ENCODE measurements at regions of chr12 and their contacts with region 1.

Region 1: GRCh38 chr12:13211859-13212664 is 15.5 kb downstream of the EMP1 start:
- DNase-seq: peak; percentile 70 to 78
- ATAC-seq: peak; percentile 55 to 57; a peak in 5 of 6 replicates
- H3K4me3 ChIP-seq: no peak overlapping the region
- H3K27ac ChIP-seq: peak overlapping the region; percentile 71 to 83
- H3K4me1 ChIP-seq: peaks cover 41% of the 10 kb centered on the region
- CTCF ChIP-seq: peak; percentile 96
- EP300 ChIP-seq: no peak
- POLR2A ChIP-seq: no peak
- RAD21 ChIP-seq: peak; percentile 96 to 97

Region 2: DNA sequence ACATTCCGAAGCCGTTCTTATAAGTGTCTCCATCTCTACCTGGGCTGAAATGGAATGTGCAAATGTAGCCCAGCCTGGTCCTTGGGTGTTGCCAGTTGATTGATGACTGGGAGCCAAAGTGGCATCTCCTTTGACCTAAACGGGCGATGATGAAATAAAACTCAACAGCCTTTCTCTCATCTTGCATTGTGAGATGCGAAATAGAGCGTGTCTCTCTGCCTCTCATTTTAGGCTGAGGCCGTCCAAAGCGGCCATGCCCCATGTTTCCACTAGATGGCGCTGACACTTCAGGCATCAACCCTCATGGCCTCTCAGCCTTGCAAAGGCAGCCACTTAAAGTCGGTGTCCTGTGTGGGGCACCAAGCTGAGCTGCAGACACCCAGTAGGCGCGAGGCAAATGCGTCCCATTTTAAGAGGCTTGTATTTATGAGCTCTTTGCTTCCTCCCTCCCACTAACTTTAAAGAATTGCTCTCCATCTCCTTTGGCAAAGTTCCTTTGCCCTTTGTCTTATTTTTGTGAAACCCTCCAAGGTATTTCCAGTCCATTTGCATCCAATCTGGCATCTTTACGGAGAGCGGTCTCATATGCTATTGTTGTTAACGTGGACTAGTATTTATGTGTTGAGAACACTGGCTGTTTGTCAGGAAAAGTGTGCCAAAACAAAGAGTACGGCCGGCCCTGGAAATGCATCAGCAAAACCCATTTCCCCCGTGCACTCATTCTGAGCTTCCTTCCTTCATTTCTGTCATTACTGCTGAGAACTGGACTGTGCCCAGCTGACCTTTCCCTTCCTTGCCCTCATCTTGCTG is 295.7 kb before region 1 on chr12:
- CTCF ChIA-PET with region 1: interaction called, 35 read pairs
- POLR2A ChIA-PET with region 1: no interaction called
- DNase-seq: peak; percentile 66 to 86
- ATAC-seq: peak; percentile 75 to 79
- H3K4me3 ChIP-seq: no peak overlapping the region
- H3K27ac ChIP-seq: peak overlapping the region; percentile 29 to 47; a peak in 4 of 6 replicates
- H3K4me1 ChIP-seq: peaks cover 49% of the 10 kb centered on the region
- CTCF ChIP-seq: peak; percentile 93
- EP300 ChIP-seq: no peak
- POLR2A ChIP-seq: no peak
- RAD21 ChIP-seq: peak; percentile 95 to 96

Region 3: DNA sequence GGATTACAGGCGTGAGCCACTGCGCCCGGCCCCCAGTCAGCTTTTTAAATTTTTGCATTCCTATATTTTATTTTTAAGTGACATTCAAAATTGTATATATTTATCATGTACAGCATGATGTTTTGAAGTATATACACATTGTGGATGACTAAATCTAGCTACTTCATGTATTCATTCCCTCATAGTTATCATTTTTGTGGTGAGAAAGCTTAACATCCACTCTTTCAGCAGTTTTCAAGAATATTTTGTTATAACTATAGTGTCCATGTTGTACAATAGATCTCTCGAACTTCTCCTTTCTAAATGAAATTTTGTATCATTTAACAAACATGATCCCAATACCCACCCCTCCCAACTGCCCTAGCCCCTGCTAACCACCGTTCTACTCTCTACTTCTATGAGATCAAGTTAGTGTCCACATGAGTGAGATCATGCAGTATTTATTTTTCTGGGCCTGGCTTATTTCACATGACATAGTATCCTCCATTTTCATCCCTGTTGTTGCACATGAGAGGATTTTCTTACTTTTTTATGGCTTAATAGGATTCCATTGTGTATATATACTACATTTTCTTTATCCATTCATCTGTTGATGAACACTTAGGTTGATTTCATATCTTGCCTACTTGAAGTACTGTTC is 203.2 kb before region 1 on chr12:
- CTCF ChIA-PET with region 1: interaction called, 11 read pairs
- POLR2A ChIA-PET with region 1: no interaction called
- DNase-seq: no peak
- ATAC-seq: no peak
- H3K4me3 ChIP-seq: no peak overlapping the region
- H3K27ac ChIP-seq: no peak overlapping the region
- H3K4me1 ChIP-seq: no peaks in the 10 kb centered on the region
- CTCF ChIP-seq: no peak
- EP300 ChIP-seq: no peak
- POLR2A ChIP-seq: no peak
- RAD21 ChIP-seq: no peak

Region 4: DNA sequence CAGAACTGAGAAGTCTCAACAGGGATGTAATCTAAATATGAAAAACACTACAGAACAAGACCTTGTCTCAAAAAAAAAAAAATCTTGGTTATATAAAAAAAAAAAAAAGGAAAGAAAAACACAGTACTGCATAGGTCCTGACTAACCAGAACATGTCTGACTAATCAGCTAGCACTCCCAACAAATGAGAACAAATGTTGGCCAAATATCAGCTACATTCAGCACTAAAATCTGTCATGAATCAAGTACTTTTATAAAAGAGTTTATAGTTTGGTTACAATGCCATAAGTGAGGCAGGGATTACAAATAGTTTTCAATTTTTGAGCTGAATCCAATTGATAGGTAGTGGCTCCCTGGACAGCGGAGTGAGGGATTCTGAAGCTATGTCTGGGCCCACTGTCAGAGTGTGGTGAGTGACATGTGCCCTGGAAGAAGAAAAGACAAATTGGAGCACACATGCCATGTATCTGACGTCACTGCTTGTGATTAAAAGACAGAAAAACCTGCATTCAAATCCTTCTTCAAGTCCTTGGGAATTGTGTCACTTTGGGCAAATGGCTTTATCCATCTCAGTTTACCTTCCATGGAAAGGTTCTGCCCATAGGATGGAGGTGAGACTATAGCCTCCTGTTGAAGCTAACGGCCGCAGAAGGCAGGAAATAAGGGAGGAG is 173.4 kb before region 1 on chr12:
- CTCF ChIA-PET with region 1: interaction called, 23 read pairs
- POLR2A ChIA-PET with region 1: no interaction called
- DNase-seq: no peak
- ATAC-seq: no peak
- H3K4me3 ChIP-seq: no peak overlapping the region
- H3K27ac ChIP-seq: no peak overlapping the region
- H3K4me1 ChIP-seq: no peaks in the 10 kb centered on the region
- CTCF ChIP-seq: no peak
- EP300 ChIP-seq: no peak
- POLR2A ChIP-seq: no peak
- RAD21 ChIP-seq: no peak

Region 5: DNA sequence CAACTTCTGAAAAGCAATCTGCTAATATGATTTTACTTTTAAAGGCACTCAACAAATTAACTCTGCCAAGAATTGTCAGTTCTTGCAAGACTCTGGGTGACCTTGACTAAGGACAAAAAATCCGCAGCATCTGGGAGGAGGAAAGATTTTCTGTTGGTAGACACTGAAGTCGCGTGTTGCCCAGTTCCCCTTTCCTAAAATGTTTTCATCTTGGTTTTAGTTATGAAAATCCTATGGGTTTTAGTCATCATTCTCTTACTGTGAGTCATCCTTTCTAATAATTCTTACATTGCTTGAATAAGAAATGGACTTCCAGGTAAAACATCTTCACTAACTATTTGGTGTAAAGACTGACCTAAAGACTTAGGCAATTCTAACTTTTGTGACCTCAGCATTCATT is 117.7 kb before region 1 on chr12:
- CTCF ChIA-PET with region 1: interaction called, 189 read pairs
- POLR2A ChIA-PET with region 1: interaction called, 8 read pairs
- DNase-seq: no peak
- ATAC-seq: no peak
- H3K4me3 ChIP-seq: no peak overlapping the region
- H3K27ac ChIP-seq: peak overlapping the region in 1 of 2 experiments; percentile 74; a peak in 2 of 6 replicates
- H3K4me1 ChIP-seq: peaks cover 41% of the 10 kb centered on the region
- CTCF ChIP-seq: no peak
- EP300 ChIP-seq: no peak
- POLR2A ChIP-seq: no peak
- RAD21 ChIP-seq: no peak

Region 6: GRCh38 chr12:13196130-13196921 is 15.7 kb before region 1 on chr12 and contains the start of gene EMP1:
- CTCF ChIA-PET with region 1: interaction called, 131 read pairs
- POLR2A ChIA-PET with region 1: no interaction called
- DNase-seq: peak; percentile 84 to 97
- ATAC-seq: peak; percentile 91
- H3K4me3 ChIP-seq: peak within 1 kb of the TSS; percentile 46
- H3K27ac ChIP-seq: peak within 1 kb of the TSS; percentile 72 to 83
- H3K4me1 ChIP-seq: peaks cover 46% of the 10 kb centered on the region
- CTCF ChIP-seq: no peak
- EP300 ChIP-seq: no peak; a peak in 2 of 5 replicates
- POLR2A ChIP-seq: no peak
- RAD21 ChIP-seq: peak in 1 of 2 experiments; percentile 29; a peak in 1 of 5 replicates
- polyA plus RNA-seq, gene EMP1: 21.2 and 25.5 TPM in 2 replicates

Region 7: DNA sequence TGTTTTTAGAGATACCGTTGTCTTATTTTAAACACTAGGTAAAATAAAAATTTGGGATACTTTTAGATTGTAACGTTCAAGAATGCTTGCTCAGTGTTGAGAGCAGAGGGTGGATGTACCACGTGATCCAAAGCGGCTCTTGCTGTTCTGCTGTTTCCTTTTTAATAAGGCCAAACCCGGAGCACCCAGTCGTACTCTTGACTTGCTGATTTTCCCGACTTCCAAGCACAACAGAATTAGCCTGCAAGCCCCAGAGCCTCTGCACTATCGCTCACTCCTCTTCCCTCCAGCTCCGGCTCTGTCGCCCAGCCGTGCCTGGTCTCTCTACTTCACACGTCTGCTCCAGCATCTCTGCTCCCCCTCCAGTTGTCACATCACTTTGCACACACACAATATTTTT is 61.8 kb after region 1 on chr12:
- CTCF ChIA-PET with region 1: no interaction called
- POLR2A ChIA-PET with region 1: no interaction called
- DNase-seq: no peak
- ATAC-seq: no peak
- H3K4me3 ChIP-seq: no peak overlapping the region
- H3K27ac ChIP-seq: no peak overlapping the region
- H3K4me1 ChIP-seq: no peaks in the 10 kb centered on the region
- CTCF ChIP-seq: no peak
- EP300 ChIP-seq: no peak
- POLR2A ChIP-seq: no peak
- RAD21 ChIP-seq: no peak